AG04449 (cell line): ENCODE measurements at regions of chr5 and their contacts with region 1.

Region 1: DNA sequence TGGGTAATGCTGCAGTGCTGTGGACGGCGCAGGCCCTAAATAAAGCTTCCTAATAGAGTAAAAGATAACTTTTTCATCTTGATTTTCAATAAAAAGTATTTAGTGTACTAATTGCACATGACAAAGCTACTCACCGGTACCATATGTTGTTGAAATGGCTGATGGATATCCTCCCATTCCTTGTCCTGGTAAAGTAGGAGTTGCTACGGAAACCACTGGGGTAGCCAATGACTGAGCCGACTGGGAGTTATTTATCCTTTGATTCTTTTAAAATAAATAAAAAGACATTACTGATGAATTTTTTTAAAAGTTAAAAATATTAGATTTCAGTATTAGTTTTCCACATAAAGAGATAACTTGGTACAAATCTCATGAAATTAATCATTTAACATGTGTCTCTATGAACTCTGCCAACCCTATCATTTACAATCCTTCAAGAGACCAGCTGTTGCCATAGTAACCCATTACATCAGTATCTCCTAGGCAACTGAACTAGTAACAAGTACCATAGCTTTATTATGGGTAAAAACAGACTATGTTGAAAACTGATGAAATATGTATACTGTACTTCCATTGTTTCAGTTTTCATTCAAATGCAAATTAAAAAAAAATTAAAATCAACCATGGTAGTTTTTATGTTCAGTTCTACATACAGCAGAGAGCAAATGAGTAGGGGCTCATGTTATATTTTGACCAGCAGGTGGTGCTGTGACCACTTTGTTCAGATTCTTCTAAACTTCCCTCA is 153.7 kb downstream of the MEF2C start:
- DNase-seq: peak; percentile 14
- H3K4me3 ChIP-seq: no peak overlapping the region
- CTCF ChIP-seq: peak; percentile 30

Region 2: GRCh38 chr5:87780831-87781760 is 948.2 kb before region 1 on chr5:
- CTCF ChIA-PET with region 1: interaction called, 201 read pairs
- POLR2A ChIA-PET with region 1: no interaction called
- DNase-seq: peak; percentile 37
- H3K4me3 ChIP-seq: no peak overlapping the region
- CTCF ChIP-seq: peak; percentile 86

Region 3: GRCh38 chr5:88746438-88746882 is 17.2 kb after region 1 on chr5:
- CTCF ChIA-PET with region 1: interaction called, 40 read pairs
- POLR2A ChIA-PET with region 1: no interaction called
- DNase-seq: no peak
- H3K4me3 ChIP-seq: no peak overlapping the region
- CTCF ChIP-seq: no peak

Region 4: GRCh38 chr5:88889189-88890069 is 160.2 kb after region 1 on chr5:
- CTCF ChIA-PET with region 1: interaction called, 41 read pairs
- POLR2A ChIA-PET with region 1: no interaction called
- DNase-seq: no peak
- H3K4me3 ChIP-seq: peak overlapping the region; percentile 62
- CTCF ChIP-seq: no peak

Region 5: GRCh38 chr5:90184764-90185163 is 1455.5 kb after region 1 on chr5:
- CTCF ChIA-PET with region 1: interaction called, 42 read pairs
- POLR2A ChIA-PET with region 1: no interaction called
- DNase-seq: no peak
- H3K4me3 ChIP-seq: no peak overlapping the region
- CTCF ChIP-seq: no peak

Region 6: GRCh38 chr5:90434116-90434714 is 1705.0 kb after region 1 on chr5:
- CTCF ChIA-PET with region 1: interaction called, 12 read pairs
- POLR2A ChIA-PET with region 1: no interaction called
- DNase-seq: no peak
- H3K4me3 ChIP-seq: no peak overlapping the region
- CTCF ChIP-seq: peak; percentile 69